ENCODE measurements at regions of chr5 and their contacts with region 1.

Region 1: GRCh38 chr5:143403593-143404415 is at the start of gene NR3C1:
- DNase-seq: peak; percentile 84
- H3K4me3 Mint-ChIP-seq: peak within 1 kb of the TSS; percentile 82
- H3K27ac Mint-ChIP-seq: peak within 1 kb of the TSS; percentile 99
- H3K4me1 Mint-ChIP-seq: peaks cover 38% of the 10 kb centered on the region
- H3K27me3 Mint-ChIP-seq: no peaks in the 10 kb centered on the region
- total RNA-seq, gene NR3C1: 41.8 to 42.9 TPM

Region 2: DNA sequence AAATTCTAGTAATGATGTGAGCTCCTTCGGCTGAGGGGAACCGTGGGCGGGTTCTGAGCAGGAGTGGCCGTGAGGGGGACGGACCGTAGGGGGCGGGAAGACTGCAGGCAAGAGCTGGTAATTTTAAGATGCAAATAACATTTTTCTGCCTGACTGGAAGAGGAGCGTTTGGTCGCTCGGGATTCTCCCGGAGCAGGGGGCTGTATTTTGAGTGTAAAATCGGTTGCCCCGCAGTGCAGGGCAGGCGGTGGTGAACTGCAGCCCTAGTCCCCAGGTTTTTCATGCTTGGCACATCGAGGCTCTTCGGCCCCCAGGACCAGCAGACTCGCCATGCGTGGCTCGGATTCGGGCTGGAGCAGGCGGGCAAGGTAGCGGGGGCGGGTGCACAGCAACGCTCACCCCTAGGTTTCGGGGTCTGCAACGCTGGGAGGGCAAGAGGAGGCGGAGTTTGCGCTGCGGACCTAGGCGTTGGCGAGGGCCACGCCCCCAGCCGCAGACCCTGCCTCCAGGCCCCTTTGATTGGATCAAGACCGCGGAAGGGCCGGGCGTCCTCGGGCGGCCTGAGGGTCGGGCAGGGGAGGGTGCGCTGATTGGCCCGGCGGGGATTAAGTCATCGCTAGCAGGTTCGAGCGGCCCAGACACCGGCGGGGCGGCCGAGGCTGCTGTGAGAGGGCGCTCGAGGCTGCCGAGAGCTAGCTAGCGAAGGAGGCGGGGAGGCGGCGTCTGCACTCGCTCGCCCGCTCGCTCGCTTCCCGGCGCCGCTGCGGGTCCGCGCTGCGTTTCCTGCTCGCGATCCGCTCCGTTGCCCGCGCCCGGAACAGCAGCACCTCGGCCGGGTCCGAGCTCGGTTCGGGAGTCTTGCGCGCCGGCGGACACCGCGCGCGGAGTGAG is 633.8 kb before region 1 on chr5 and contains the start of gene ARHGAP26:
- CTCF ChIA-PET with region 1: no interaction called
- intact Hi-C with region 1: loop called (anchors 1 kb)
- DNase-seq: peak; percentile 94
- H3K4me3 Mint-ChIP-seq: peak within 1 kb of the TSS; percentile 95
- H3K27ac Mint-ChIP-seq: peak within 1 kb of the TSS; percentile 81
- H3K4me1 Mint-ChIP-seq: peaks cover 37% of the 10 kb centered on the region
- H3K27me3 Mint-ChIP-seq: no peaks in the 10 kb centered on the region
- total RNA-seq, gene ARHGAP26: 17.0 to 19.5 TPM

Region 3: GRCh38 chr5:143002459-143003328 is 401.1 kb before region 1 on chr5:
- CTCF ChIA-PET with region 1: interaction called, 14 read pairs
- intact Hi-C with region 1: loop called (anchors 1 kb)
- DNase-seq: peak; percentile 82
- H3K4me3 Mint-ChIP-seq: peak overlapping the region; percentile 2
- H3K27ac Mint-ChIP-seq: peak overlapping the region; percentile 92
- H3K4me1 Mint-ChIP-seq: peaks cover 53% of the 10 kb centered on the region
- H3K27me3 Mint-ChIP-seq: no peaks in the 10 kb centered on the region

Region 4: GRCh38 chr5:143033535-143034250 is 370.1 kb before region 1 on chr5:
- CTCF ChIA-PET with region 1: interaction called, 7 read pairs
- intact Hi-C with region 1: loop called (anchors 1 kb)
- DNase-seq: no peak
- H3K4me3 Mint-ChIP-seq: no peak overlapping the region
- H3K27ac Mint-ChIP-seq: no peak overlapping the region
- H3K4me1 Mint-ChIP-seq: peaks cover 75% of the 10 kb centered on the region
- H3K27me3 Mint-ChIP-seq: no peaks in the 10 kb centered on the region

Region 5: DNA sequence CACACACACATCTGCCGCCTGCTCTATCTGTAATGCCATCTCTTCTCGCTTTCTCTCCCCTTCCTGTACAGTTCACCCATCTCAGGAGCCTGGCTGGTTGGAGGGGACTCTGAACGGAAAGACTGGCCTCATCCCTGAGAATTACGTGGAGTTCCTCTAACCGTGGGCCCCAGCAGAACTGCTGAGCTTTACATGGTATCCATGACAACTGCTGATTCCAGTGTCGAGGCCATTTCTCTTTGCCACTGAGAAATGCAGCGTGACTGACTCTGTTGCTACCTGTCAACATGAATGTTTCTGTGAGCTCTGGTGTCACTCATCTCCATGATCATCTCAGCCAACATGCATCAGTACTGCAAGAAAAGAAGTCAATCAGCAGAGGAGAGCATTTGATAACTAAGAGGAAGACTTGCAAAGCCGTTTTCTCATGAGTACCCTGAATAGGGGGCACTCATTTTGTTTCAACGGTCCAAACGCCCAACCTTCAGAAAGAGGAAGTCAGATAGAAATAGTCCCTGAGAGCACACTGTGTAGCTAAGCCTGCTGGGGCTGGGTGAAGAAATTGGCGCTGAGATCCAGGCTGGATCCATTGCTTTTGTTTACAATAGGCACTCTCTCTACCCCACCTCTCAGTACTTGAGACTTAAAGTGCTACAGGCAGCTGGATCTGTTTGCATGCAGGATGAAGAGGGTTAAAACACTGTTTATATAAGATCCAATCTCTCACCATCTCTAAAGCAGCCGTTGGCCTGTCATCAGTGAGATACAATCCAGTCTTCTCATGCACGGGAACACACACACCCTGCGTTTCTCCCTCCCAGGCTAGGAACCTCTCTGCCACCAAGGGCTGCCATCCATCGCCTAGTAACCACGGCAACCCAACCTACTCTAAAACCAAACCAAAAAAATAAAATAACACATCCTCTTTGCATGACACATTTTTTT is 181.2 kb before region 1 on chr5:
- CTCF ChIA-PET with region 1: interaction called, 3 read pairs
- intact Hi-C with region 1: loop called (anchors 2 kb)
- DNase-seq: peak; percentile 56
- H3K4me3 Mint-ChIP-seq: peak overlapping the region; percentile 15
- H3K27ac Mint-ChIP-seq: peak overlapping the region; percentile 78
- H3K4me1 Mint-ChIP-seq: peaks cover 39% of the 10 kb centered on the region
- H3K27me3 Mint-ChIP-seq: no peaks in the 10 kb centered on the region

Region 6: DNA sequence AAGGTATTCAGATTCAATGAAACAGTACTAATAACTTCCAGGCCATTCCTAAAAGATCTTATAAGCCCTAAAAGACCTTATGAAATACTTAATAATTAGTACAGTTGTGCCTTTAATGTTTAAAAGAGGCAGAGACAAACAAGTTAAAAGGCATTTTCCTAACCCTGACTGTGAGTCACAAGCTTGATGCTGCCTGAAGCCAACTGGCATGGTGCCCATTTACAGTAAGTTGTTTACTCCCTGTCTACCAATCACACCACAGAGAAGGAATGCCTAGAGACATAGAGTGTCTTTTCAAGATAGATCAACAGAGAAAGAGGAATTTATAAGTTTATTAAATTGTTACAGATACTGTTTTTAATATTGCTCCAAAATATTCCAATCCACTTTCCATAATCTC is 48.1 kb before region 1 on chr5:
- CTCF ChIA-PET with region 1: interaction called, 6 read pairs
- intact Hi-C with region 1: loop called (anchors 1 kb)
- DNase-seq: peak; percentile 60
- H3K4me3 Mint-ChIP-seq: no peak overlapping the region
- H3K27ac Mint-ChIP-seq: no peak overlapping the region
- H3K4me1 Mint-ChIP-seq: peaks cover 71% of the 10 kb centered on the region
- H3K27me3 Mint-ChIP-seq: no peaks in the 10 kb centered on the region

Region 7: GRCh38 chr5:143824851-143825720 is 421.3 kb after region 1 on chr5:
- CTCF ChIA-PET with region 1: interaction called, 5 read pairs
- intact Hi-C with region 1: loop called (anchors 1 kb)
- DNase-seq: peak; percentile 90
- H3K4me3 Mint-ChIP-seq: no peak overlapping the region
- H3K27ac Mint-ChIP-seq: no peak overlapping the region
- H3K4me1 Mint-ChIP-seq: peaks cover 17% of the 10 kb centered on the region
- H3K27me3 Mint-ChIP-seq: no peaks in the 10 kb centered on the region

Measured in activated naive CD4-positive, alpha-beta T cell treated with anti-CD3 and anti-CD28 coated beads for 36 hours (primary cell).